Sigmoid colon (tissue), 7 donors: ENCODE measurements at regions of chr6 and their contacts with region 1.

Region 1: GRCh38 chr6:10030942-10031537 is 383.8 kb downstream of the TFAP2A start:
- DNase-seq: no peak
- H3K4me3 ChIP-seq: no peak overlapping the region
- H3K27ac ChIP-seq: no peak overlapping the region
- H3K4me1 ChIP-seq: no peaks in the 10 kb centered on the region
- H3K27me3 ChIP-seq: no peaks in the 10 kb centered on the region
- CTCF ChIP-seq: peak in 1 of 4 experiments; percentile 48
- EP300 ChIP-seq: no peak
- POLR2A ChIP-seq: no peak

Region 2: GRCh38 chr6:10230559-10230958 is 199.5 kb after region 1 on chr6:
- intact Hi-C with region 1: no loop called
- DNase-seq: no peak
- H3K4me3 ChIP-seq: no peak overlapping the region
- H3K27ac ChIP-seq: no peak overlapping the region
- H3K4me1 ChIP-seq: no peaks in the 10 kb centered on the region
- H3K27me3 ChIP-seq: no peaks in the 10 kb centered on the region
- CTCF ChIP-seq: no peak
- EP300 ChIP-seq: no peak
- POLR2A ChIP-seq: no peak

Region 3: DNA sequence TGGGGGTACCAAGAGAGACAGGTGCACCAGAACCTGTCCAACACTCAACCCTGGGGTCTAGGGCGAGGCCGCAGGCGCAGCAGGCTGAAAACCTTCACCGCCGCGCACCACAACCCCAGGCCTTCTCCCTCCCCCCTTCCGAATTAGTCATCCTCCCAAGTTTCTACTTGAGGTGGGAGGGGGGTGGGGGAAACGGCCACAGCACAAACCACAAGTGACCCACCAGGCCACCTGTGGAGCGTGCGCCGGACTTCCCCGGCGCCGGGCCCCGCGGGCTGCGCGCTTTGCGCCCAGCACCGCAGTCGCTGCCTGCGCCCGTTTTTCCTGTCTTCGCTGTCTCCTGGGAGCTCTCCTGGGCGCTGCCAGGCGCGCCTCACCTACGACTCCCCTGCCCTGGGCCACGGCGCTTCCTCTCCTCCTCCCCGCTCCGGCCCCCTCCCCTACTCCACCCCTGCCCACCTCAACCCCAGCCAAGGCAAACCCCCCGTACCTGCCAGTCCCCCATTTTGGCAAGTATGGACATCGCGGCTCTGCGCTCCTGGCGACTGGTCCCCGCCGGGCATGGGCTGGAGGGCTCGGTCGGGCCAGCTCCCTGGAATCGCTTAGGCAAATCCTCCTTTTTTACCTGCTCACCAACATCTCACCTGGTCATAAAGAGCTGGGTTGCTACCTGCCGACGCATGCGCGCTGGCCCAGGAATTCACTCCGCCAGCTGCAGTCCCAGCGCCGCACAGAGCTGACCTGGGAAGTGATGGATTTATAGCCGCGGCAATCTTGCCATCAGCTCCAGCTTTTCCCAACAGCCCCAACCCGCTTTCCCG is 388.1 kb after region 1 on chr6:
- intact Hi-C with region 1: no loop called
- DNase-seq: no peak
- H3K4me3 ChIP-seq: no peak overlapping the region
- H3K27ac ChIP-seq: no peak overlapping the region
- H3K4me1 ChIP-seq: peaks cover 0 to 41% (median 21%) of the 10 kb centered on the region in 4 donors
- H3K27me3 ChIP-seq: peaks cover 61 to 100% (median 100%) of the 10 kb centered on the region in 3 donors
- CTCF ChIP-seq: no peak
- EP300 ChIP-seq: no peak
- POLR2A ChIP-seq: no peak

Region 4: DNA sequence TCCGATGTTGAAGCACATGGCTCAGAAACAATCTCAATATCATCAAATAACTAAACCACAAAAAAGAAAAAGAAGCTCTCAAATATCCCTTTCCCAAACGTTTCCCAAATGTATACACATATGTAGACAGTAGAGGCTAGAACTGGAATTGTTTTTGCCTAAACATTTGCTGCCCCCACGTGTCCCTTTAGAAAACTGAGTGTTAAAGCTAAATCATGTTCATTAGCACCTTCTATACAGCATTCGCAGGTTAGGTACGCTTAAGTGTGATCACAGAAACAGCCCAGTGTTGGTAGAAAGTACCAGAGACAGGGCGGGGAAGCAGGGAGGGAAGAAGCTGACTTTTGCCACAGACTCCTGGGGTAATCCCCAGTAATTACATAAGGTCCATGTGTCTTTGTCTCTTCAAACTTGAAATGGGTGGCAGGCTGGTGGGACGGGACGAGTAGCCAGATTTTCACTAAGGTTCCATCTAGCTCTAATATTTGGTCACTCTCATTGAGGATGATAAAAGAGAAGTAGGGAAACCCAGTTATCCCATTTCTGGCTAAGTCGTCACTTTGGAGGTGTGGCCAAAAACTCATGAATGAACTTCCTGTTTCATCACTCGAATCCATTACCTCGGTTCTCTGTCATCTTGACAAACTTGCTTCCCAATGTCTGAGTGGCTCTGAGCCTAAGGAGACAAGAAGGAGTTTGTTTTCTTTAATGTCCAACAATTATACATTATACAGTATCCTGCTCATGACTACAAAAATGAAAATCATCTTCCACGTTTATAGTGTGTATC is 398.8 kb after region 1 on chr6:
- intact Hi-C with region 1: loop called (anchors 5 kb)
- DNase-seq: no peak
- H3K4me3 ChIP-seq: no peak overlapping the region
- H3K27ac ChIP-seq: no peak overlapping the region
- H3K4me1 ChIP-seq: peaks cover 0 to 13% (median 12%) of the 10 kb centered on the region in 4 donors
- H3K27me3 ChIP-seq: peaks cover 13 to 51% (median 19%) of the 10 kb centered on the region in 3 donors
- CTCF ChIP-seq: peak; percentile 5 to 52 (median 47)
- EP300 ChIP-seq: no peak
- POLR2A ChIP-seq: no peak